MCF 10A (cell line): ENCODE measurements at regions of chr14 and their contacts with region 1.

Region 1: DNA sequence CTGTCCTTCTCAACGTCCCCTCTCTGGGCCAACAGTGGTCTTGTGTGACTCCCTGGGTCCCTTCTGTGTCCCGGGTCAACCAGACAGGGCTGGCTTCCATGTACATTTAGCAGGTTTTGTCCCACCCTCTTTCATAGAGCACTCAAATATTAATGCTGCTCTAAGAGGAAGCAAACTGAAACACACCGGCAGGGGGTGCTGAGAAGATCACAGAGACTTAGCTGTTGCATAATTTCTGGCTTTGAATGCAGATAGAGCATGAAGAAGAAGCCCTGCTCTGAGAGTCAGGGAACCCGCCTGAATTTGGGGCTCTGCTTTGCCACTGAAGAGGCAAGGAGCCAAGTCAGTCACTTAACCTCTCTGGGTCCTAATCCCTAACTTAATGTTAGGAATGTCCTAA is 138.7 kb downstream of the ESRRB start:
- DNase-seq: peak; percentile 72
- H3K4me3 Mint-ChIP-seq: no peak overlapping the region
- H3K27ac Mint-ChIP-seq: no peak overlapping the region
- H3K4me1 Mint-ChIP-seq: peaks cover 9% of the 10 kb centered on the region
- H3K27me3 Mint-ChIP-seq: peaks cover 23% of the 10 kb centered on the region
- CTCF ChIP-seq: peak; percentile 58

Region 2: GRCh38 chr14:76550534-76550933 is 35.9 kb after region 1 on chr14:
- CTCF ChIA-PET with region 1: interaction called, 5 read pairs
- POLR2A ChIA-PET with region 1: interaction called, 26 read pairs
- intact Hi-C with region 1: no loop called
- DNase-seq: peak; percentile 95
- H3K4me3 Mint-ChIP-seq: no peak overlapping the region
- H3K27ac Mint-ChIP-seq: peak overlapping the region; percentile 39
- H3K4me1 Mint-ChIP-seq: peaks cover 23% of the 10 kb centered on the region
- H3K27me3 Mint-ChIP-seq: no peaks in the 10 kb centered on the region
- CTCF ChIP-seq: no peak